ENCODE measurements at regions of chr3 and their contacts with region 1.

Region 1: DNA sequence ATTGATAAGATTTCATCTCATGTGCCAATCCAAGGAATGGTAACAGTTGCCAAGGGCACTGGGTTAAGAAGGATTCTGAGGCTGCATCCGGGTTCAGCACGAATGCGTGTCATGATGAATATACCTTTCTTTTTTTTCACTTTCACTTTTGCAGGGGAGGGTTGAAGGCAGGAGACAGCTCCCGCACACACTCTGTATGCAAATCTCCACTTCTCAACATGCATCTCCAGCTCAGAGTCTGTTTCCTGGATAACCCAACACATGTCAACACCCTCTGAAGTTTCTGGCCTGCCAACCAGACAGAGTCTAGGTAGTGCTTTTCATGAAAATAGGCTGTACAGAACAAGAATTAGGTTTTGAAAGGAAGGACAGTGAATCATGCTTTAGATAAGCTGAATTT is 21.6 kb downstream of the B4GALT4 start:
- DNase-seq: peak in 7 of 9 donors; percentile 65 to 87 (median 76)
- ATAC-seq: peak; percentile 96
- H3K4me3 ChIP-seq: peak overlapping the region; percentile 34
- H3K4me3 Mint-ChIP-seq: peak overlapping the region; percentile 54 to 87 (median 70)
- H3K27ac ChIP-seq: peak overlapping the region; percentile 68
- H3K27ac Mint-ChIP-seq: peak overlapping the region; percentile 90 to 99 (median 94)
- H3K4me1 ChIP-seq: peaks cover 9 to 25% of the 10 kb centered on the region in 2 donors
- H3K4me1 Mint-ChIP-seq: peaks cover 22 to 84% (median 71%) of the 10 kb centered on the region in 7 donors
- H3K27me3 ChIP-seq: no peaks in the 10 kb centered on the region
- H3K27me3 Mint-ChIP-seq: no peaks in the 10 kb centered on the region

Region 2: DNA sequence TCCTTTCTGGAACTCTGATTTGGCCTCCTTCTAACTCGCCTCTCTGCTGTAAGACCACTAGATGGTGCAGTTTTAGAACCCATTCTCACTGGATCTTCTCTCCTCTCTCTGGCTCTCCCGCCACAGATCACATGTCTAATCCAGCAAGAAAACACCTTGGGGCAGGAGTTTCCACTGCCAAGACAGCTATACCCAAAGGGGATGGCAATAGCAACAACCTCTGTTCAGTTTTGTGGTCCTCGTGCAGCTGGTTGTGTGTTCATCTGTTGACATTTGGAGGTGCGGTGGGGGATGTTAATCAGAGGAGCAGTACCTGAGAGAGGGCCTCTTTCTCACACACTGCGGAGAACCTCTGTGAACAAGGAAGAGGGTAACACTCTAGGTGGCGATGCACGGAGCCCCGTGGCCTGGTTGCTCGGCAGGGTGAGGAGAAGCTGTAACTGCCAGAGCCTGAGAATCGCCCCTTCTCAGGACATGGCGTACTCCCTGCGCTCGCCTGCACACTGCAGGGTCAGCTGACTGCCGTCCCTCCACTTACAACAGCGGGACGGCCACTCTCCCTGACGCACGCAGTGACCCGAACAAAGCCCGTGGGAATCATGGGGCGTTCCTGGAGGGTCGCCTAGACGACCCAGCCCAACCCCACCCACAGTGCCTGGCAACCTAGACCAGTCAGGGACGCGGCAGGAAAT is 73.4 kb before region 1 on chr3 and contains the start of gene TEX55:
- CTCF ChIA-PET with region 1: no interaction called
- POLR2A ChIA-PET with region 1: no interaction called
- intact Hi-C with region 1: loop called in 1 of 2 experiments (anchors 2 kb)
- DNase-seq: peak in 7 of 9 donors; percentile 19 to 48 (median 34)
- ATAC-seq: peak; percentile 57
- H3K4me3 ChIP-seq: no peak within 1 kb of the TSS
- H3K4me3 Mint-ChIP-seq: no peak within 1 kb of the TSS
- H3K27ac ChIP-seq: no peak within 1 kb of the TSS
- H3K27ac Mint-ChIP-seq: peak within 1 kb of the TSS in 2 of 9 donors; percentile 9 to 12
- H3K4me1 ChIP-seq: no peaks in the 10 kb centered on the region
- H3K4me1 Mint-ChIP-seq: peaks cover 0 to 8% (median 5%) of the 10 kb centered on the region in 7 donors
- H3K27me3 ChIP-seq: no peaks in the 10 kb centered on the region
- H3K27me3 Mint-ChIP-seq: no peaks in the 10 kb centered on the region
- total RNA-seq, gene TEX55: not detected

Region 3: DNA sequence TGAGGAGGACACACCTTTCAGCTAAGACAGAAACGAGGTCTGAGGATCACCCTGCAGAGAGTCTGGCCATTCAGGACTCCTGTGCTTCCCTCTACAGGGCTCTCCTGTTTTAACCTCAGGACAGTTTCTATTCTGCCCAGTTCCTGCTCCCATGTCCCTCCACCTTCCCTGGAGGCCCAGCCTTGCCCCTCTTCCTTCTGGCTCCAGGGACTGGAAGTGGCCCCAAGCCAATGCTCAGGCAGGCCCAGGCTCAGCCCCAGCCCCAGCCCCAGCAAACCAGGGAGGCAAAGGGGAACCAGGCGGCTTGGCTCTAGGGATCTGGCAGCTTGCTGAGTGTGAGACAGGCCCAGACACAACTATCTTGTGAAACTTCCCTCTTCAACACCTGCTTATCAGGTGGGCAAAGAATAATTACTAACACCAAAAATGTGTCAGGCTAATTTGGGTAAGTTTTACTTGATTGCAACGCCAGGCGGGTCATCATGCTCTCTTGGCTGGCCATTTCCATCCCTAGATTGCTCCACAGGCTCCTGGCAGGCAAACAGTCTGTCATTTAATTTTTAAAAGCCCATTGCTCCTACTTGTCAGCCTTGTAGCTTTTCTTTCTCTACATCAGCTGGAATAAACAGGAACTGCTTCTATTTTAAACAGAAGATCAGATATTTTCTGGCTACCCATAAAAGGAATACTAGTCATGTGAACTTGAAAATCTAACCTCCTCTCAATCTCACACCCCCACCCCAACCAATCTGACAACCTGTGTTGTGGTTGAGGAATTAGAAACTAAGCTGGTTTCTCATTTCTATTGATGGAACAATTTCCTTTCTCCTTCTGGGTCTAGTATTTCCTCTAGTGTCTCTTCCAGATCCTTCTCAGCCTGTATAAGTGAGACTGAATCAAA is 12.2 kb before region 1 on chr3:
- CTCF ChIA-PET with region 1: interaction called, 4 read pairs
- POLR2A ChIA-PET with region 1: interaction called, 4 read pairs
- intact Hi-C with region 1: loop called in 1 of 2 experiments (anchors 1 kb)
- DNase-seq: peak in 7 of 9 donors; percentile 38 to 62 (median 54)
- ATAC-seq: peak; percentile 64
- H3K4me3 ChIP-seq: peak overlapping the region; percentile 40
- H3K4me3 Mint-ChIP-seq: peak overlapping the region; percentile 45 to 88 (median 74)
- H3K27ac ChIP-seq: peak overlapping the region; percentile 66
- H3K27ac Mint-ChIP-seq: peak overlapping the region; percentile 15 to 96 (median 93)
- H3K4me1 ChIP-seq: peaks cover 0 to 57% of the 10 kb centered on the region in 2 donors
- H3K4me1 Mint-ChIP-seq: peaks cover 34 to 89% (median 79%) of the 10 kb centered on the region in 7 donors
- H3K27me3 ChIP-seq: no peaks in the 10 kb centered on the region
- H3K27me3 Mint-ChIP-seq: no peaks in the 10 kb centered on the region

Region 4: GRCh38 chr3:119293871-119294695 is 75.0 kb after region 1 on chr3 and contains the start of gene ARHGAP31:
- CTCF ChIA-PET with region 1: no interaction called
- POLR2A ChIA-PET with region 1: interaction called, 3 read pairs
- intact Hi-C with region 1: loop called in 1 of 2 experiments (anchors 2 kb)
- DNase-seq: peak; percentile 70 to 91 (median 86)
- ATAC-seq: peak; percentile 77
- H3K4me3 ChIP-seq: peak within 1 kb of the TSS; percentile 50
- H3K4me3 Mint-ChIP-seq: peak within 1 kb of the TSS; percentile 68 to 95 (median 90)
- H3K27ac ChIP-seq: peak within 1 kb of the TSS; percentile 91
- H3K27ac Mint-ChIP-seq: peak within 1 kb of the TSS; percentile 71 to 99 (median 92)
- H3K4me1 ChIP-seq: peaks cover 22 to 26% of the 10 kb centered on the region in 2 donors
- H3K4me1 Mint-ChIP-seq: peaks cover 26 to 74% (median 63%) of the 10 kb centered on the region in 7 donors
- H3K27me3 ChIP-seq: no peaks in the 10 kb centered on the region
- H3K27me3 Mint-ChIP-seq: peaks cover 0 to 43% (median 0%) of the 10 kb centered on the region in 5 donors
- total RNA-seq, gene ARHGAP31: 3.0 to 11.9 (median 3.1) TPM

Measured in naive thymus-derived CD4-positive, alpha-beta T cell (primary cell).